Head of caudate nucleus (tissue), 42 donors: ENCODE measurements at regions of chr5 and their contacts with region 1.

Region 1: GRCh38 chr5:138575194-138576015 is at the start of gene HSPA9:
- DNase-seq: peak; percentile 96 to 100 (median 98)

Region 2: DNA sequence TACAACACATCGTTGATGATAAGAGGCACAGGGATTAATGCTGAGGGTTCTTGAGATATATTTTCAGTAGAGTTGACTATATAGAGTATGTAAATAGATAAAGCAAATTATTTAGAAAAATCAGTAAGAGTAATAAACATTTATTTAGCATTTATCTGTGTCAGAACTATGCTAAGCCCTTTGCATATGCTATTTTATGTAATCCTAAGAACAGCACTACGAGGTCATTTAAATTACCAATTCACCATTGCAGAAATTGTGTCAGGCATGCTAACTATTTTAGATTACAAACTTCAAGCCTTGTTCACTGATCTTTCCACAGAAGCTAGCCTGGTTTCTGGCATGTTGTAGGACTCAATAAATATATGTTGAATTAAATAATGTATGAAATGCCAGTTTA is 157.0 kb before region 1 on chr5:
- intact Hi-C with region 1: no loop called
- DNase-seq: no peak

Region 3: DNA sequence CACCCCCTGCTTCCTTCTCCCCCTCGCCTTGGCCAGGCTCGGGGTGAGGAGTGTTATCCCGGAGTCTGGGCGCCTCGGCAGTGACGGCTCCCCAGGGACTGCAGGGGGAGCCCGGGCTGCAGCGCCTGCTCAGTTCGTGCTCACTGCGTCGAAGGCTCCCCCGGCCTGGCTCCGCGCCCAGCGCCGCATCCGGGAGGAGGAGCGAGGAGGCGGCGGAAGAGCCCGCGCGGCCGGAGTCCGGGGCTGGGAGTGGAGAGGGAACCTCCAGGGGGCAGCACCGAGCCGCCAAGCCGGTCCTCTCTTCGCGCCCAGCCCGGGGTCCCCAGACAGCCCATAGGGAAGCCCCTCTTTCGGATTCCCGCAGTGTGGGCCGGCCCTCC is 111.4 kb before region 1 on chr5:
- intact Hi-C with region 1: loop called (anchors 10 kb)
- DNase-seq: peak; percentile 75 to 97 (median 94)

Region 4: GRCh38 chr5:138542956-138543729 is 32.3 kb before region 1 on chr5 and contains the start of gene ETF1:
- intact Hi-C with region 1: loop called (anchors 1 kb)
- DNase-seq: peak; percentile 100

Region 5: GRCh38 chr5:139251695-139252288 is 676.4 kb after region 1 on chr5:
- intact Hi-C with region 1: no loop called
- DNase-seq: no peak